Naive thymus-derived CD4-positive, alpha-beta T cell (primary cell): ENCODE measurements at regions of chr3 and their contacts with region 1.

Region 1: DNA sequence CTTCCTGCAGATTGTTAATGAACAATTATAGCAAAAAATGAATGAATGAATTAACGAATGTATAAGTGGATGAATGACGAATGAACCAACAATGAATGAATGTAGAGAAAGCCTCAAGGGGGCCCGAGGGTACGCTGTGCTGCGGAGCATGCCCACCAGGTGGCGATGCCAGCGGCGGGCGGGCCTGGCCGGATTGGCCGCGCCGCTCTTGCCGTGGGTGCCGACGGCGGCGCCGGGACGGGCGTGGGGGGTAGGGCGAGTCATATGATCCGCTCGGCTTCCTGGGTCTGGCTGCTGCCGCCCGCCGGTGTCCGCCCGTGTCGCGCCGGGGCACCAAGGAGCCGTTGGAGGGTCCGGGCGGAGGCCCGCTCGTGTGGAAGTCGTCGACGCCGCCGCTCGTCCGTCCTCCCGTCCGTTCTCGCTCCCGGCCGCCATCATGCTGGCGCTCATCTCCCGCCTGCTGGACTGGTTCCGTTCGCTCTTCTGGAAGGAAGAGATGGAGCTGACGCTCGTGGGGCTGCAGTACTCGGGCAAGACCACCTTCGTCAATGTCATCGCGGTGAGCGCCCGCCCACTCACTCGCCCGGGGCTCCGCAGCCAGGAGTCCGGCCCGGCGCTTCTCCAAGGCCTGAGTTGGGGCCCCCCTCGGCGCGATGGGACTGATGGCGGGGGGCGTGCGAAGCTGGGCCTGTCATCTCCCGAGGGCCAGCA is at the start of gene ARL8B:
- DNase-seq: peak; percentile 82 to 97 (median 89)
- ATAC-seq: peak; percentile 100
- H3K4me3 ChIP-seq: peak within 1 kb of the TSS; percentile 92
- H3K4me3 Mint-ChIP-seq: peak within 1 kb of the TSS; percentile 81 to 96 (median 88)
- H3K27ac ChIP-seq: peak within 1 kb of the TSS; percentile 88
- H3K27ac Mint-ChIP-seq: peak within 1 kb of the TSS; percentile 79 to 96 (median 88)
- H3K4me1 ChIP-seq: peaks cover 22% of the 10 kb centered on the region in 2 donors
- H3K4me1 Mint-ChIP-seq: peaks cover 25 to 54% (median 47%) of the 10 kb centered on the region in 7 donors
- H3K27me3 ChIP-seq: no peaks in the 10 kb centered on the region
- H3K27me3 Mint-ChIP-seq: no peaks in the 10 kb centered on the region
- total RNA-seq, gene ARL8B: 43.7 to 61.6 (median 48.4) TPM

Region 2: GRCh38 chr3:3179407-3180094 is 1942.6 kb before region 1 on chr3 and contains the start of gene CRBN:
- CTCF ChIA-PET with region 1: no interaction called
- POLR2A ChIA-PET with region 1: no interaction called
- intact Hi-C with region 1: loop called (anchors 1 to 5 kb)
- DNase-seq: peak; percentile 82 to 91 (median 89)
- ATAC-seq: peak; percentile 100
- H3K4me3 ChIP-seq: peak within 1 kb of the TSS; percentile 86
- H3K4me3 Mint-ChIP-seq: peak within 1 kb of the TSS; percentile 88 to 99 (median 94)
- H3K27ac ChIP-seq: peak within 1 kb of the TSS; percentile 87
- H3K27ac Mint-ChIP-seq: peak within 1 kb of the TSS; percentile 89 to 98 (median 95)
- H3K4me1 ChIP-seq: peaks cover 24 to 36% of the 10 kb centered on the region in 2 donors
- H3K4me1 Mint-ChIP-seq: peaks cover 28 to 56% (median 46%) of the 10 kb centered on the region in 7 donors
- H3K27me3 ChIP-seq: no peaks in the 10 kb centered on the region
- H3K27me3 Mint-ChIP-seq: peaks cover 0 to 15% (median 0%) of the 10 kb centered on the region in 5 donors
- total RNA-seq, gene CRBN: 69.1 to 169 (median 134) TPM

Region 3: GRCh38 chr3:4466741-4467521 is 655.3 kb before region 1 on chr3 and contains the start of gene SUMF1:
- CTCF ChIA-PET with region 1: no interaction called
- POLR2A ChIA-PET with region 1: no interaction called
- intact Hi-C with region 1: loop called (anchors 1 kb)
- DNase-seq: peak; percentile 59 to 79 (median 70)
- ATAC-seq: peak; percentile 98
- H3K4me3 ChIP-seq: peak within 1 kb of the TSS; percentile 90
- H3K4me3 Mint-ChIP-seq: peak within 1 kb of the TSS; percentile 90 to 95 (median 92)
- H3K27ac ChIP-seq: peak within 1 kb of the TSS; percentile 77
- H3K27ac Mint-ChIP-seq: peak within 1 kb of the TSS; percentile 86 to 96 (median 94)
- H3K4me1 ChIP-seq: peaks cover 5 to 7% of the 10 kb centered on the region in 2 donors
- H3K4me1 Mint-ChIP-seq: peaks cover 12 to 38% (median 21%) of the 10 kb centered on the region in 7 donors
- H3K27me3 ChIP-seq: no peaks in the 10 kb centered on the region
- H3K27me3 Mint-ChIP-seq: peaks cover 0 to 2% (median under 1%) of the 10 kb centered on the region in 5 donors
- total RNA-seq, gene SUMF1: 9.2 to 20.0 (median 16.0) TPM

Region 4: GRCh38 chr3:4722103-4722502 is 400.1 kb before region 1 on chr3:
- CTCF ChIA-PET with region 1: no interaction called
- POLR2A ChIA-PET with region 1: no interaction called
- intact Hi-C with region 1: loop called in 1 of 2 experiments (anchors 5 kb)
- DNase-seq: peak in 2 of 9 donors; percentile 27 to 33
- ATAC-seq: peak; percentile 76
- H3K4me3 ChIP-seq: no peak overlapping the region
- H3K4me3 Mint-ChIP-seq: peak overlapping the region in 1 of 10 donors; percentile 33
- H3K27ac ChIP-seq: no peak overlapping the region
- H3K27ac Mint-ChIP-seq: peak overlapping the region in 2 of 9 donors; percentile 34 to 82
- H3K4me1 ChIP-seq: no peaks in the 10 kb centered on the region
- H3K4me1 Mint-ChIP-seq: peaks cover 0 to 67% (median 9%) of the 10 kb centered on the region in 7 donors
- H3K27me3 ChIP-seq: no peaks in the 10 kb centered on the region
- H3K27me3 Mint-ChIP-seq: no peaks in the 10 kb centered on the region

Region 5: DNA sequence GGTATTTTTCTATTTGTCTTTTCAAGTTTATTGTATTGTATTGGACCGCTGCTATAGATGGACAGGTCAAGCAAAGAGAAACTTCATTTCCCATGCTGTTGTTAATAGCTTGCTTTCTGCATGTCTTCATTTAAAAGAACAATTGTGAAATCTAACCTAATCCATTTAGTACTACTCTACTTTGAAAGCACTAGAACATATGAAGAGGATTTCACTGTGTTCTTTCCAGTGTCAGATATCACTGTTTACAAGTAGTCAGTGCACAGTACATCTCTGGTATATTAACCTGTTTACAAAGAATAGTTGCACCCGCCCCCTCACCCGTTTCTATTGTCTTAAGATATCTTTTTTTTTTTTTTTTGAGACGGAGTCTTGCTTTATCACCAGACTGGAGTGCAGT is 43.5 kb after region 1 on chr3:
- CTCF ChIA-PET with region 1: no interaction called
- POLR2A ChIA-PET with region 1: no interaction called
- intact Hi-C with region 1: loop called in 1 of 2 experiments (anchors 5 kb)
- DNase-seq: no peak
- ATAC-seq: no peak
- H3K4me3 ChIP-seq: no peak overlapping the region
- H3K4me3 Mint-ChIP-seq: no peak overlapping the region
- H3K27ac ChIP-seq: no peak overlapping the region
- H3K27ac Mint-ChIP-seq: peak overlapping the region in 5 of 9 donors; percentile 24 to 45 (median 34)
- H3K4me1 ChIP-seq: peaks cover 0 to 18% of the 10 kb centered on the region in 2 donors
- H3K4me1 Mint-ChIP-seq: peaks cover 23 to 85% (median 77%) of the 10 kb centered on the region in 7 donors
- H3K27me3 ChIP-seq: no peaks in the 10 kb centered on the region
- H3K27me3 Mint-ChIP-seq: no peaks in the 10 kb centered on the region

Region 6: GRCh38 chr3:5194341-5195159 is 72.4 kb after region 1 on chr3:
- CTCF ChIA-PET with region 1: interaction called, 3 read pairs
- POLR2A ChIA-PET with region 1: interaction called, 5 read pairs
- intact Hi-C with region 1: loop called (anchors 1 kb)
- DNase-seq: peak in 1 of 9 donors; percentile 69
- ATAC-seq: peak; percentile 54
- H3K4me3 ChIP-seq: no peak overlapping the region
- H3K4me3 Mint-ChIP-seq: peak overlapping the region; percentile 2 to 78 (median 46)
- H3K27ac ChIP-seq: peak overlapping the region; percentile 64
- H3K27ac Mint-ChIP-seq: peak overlapping the region; percentile 63 to 96 (median 93)
- H3K4me1 ChIP-seq: peaks cover 76 to 88% of the 10 kb centered on the region in 2 donors
- H3K4me1 Mint-ChIP-seq: peaks cover 73 to 90% (median 87%) of the 10 kb centered on the region in 7 donors
- H3K27me3 ChIP-seq: no peaks in the 10 kb centered on the region
- H3K27me3 Mint-ChIP-seq: no peaks in the 10 kb centered on the region